OCI-LY7 (cell line): ENCODE measurements at regions of chr10 and their contacts with region 1.

Region 1: GRCh38 chr10:124688889-124689670 is 55.1 kb downstream of the FAM53B start:
- DNase-seq: no peak
- H3K4me3 ChIP-seq: no peak overlapping the region
- H3K27ac ChIP-seq: no peak overlapping the region
- H3K4me1 ChIP-seq: peaks cover 24% of the 10 kb centered on the region
- CTCF ChIP-seq: no peak

Region 2: GRCh38 chr10:124713679-124714255 is 24.7 kb after region 1 on chr10:
- CTCF ChIA-PET with region 1: no interaction called
- POLR2A ChIA-PET with region 1: interaction called, 10 read pairs
- intact Hi-C with region 1: no loop called
- DNase-seq: no peak
- H3K4me3 ChIP-seq: no peak overlapping the region
- H3K27ac ChIP-seq: no peak overlapping the region
- H3K4me1 ChIP-seq: peaks cover 40% of the 10 kb centered on the region
- CTCF ChIP-seq: no peak